ENCODE measurements at regions of chr2 and their contacts with region 1.

Region 1: GRCh38 chr2:240060977-240061591 is 7.8 kb upstream of the OR6B3 start:
- DNase-seq: peak; percentile 54
- H3K4me3 ChIP-seq: no peak overlapping the region
- H3K27ac ChIP-seq: no peak overlapping the region
- H3K4me1 ChIP-seq: no peaks in the 10 kb centered on the region
- H3K27me3 ChIP-seq: no peaks in the 10 kb centered on the region
- CTCF ChIP-seq: peak; percentile 29 to 90 (median 78)
- POLR2A ChIP-seq: no peak

Region 2: GRCh38 chr2:240143801-240144648 is 82.9 kb after region 1 on chr2:
- intact Hi-C with region 1: loop called (anchors 2 kb)
- DNase-seq: peak; percentile 63 to 67
- H3K4me3 ChIP-seq: no peak overlapping the region
- H3K27ac ChIP-seq: no peak overlapping the region
- H3K4me1 ChIP-seq: peaks cover 19 to 26% of the 10 kb centered on the region in 2 donors
- H3K27me3 ChIP-seq: no peaks in the 10 kb centered on the region
- CTCF ChIP-seq: peak; percentile 87 to 97 (median 89)
- POLR2A ChIP-seq: no peak